Caco-2 (cell line): ENCODE measurements at regions of chr7 and their contacts with region 1.

Region 1: GRCh38 chr7:28921822-28922221 is 36.3 kb downstream of the TRIL start:
- DNase-seq: peak; percentile 62 to 68
- H3K4me3 ChIP-seq: no peak overlapping the region
- H3K4me3 Mint-ChIP-seq: no peak overlapping the region
- H3K27ac Mint-ChIP-seq: no peak overlapping the region
- H3K4me1 ChIP-seq: peaks cover 6% of the 10 kb centered on the region
- H3K4me1 Mint-ChIP-seq: peaks cover 10% of the 10 kb centered on the region
- H3K27me3 ChIP-seq: no peaks in the 10 kb centered on the region
- H3K27me3 Mint-ChIP-seq: no peaks in the 10 kb centered on the region
- CTCF ChIP-seq: peak; percentile 83 to 88

Region 2: DNA sequence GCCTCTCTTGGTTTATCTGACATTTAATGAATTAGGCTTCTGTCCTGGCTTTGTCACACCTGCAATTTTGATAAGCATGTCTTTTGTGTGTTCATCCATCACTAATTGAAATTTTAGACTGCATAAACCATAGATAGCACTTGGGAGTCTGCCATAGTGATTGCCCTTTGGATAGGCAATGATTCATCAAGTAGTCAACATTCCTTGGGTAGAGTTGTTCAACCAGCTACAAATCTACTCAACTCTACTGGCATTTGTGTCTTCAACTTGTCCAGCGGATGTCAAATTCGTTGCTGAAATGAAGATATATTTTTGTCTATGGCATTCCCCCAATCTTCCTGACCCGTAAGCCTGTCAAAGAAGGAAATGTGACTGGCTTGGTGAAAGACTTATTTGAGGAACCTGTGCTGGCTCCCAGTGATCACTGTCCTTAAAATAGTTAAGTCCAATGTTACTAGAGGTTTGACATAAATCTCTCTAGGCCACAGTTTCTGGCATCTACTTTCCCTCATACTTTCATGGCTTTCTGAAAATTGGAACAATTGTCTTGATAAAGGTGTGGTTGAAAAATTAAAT is 543.2 kb before region 1 on chr7:
- CTCF ChIA-PET with region 1: no interaction called
- POLR2A ChIA-PET with region 1: no interaction called
- intact Hi-C with region 1: no loop called
- DNase-seq: no peak
- H3K4me3 ChIP-seq: no peak overlapping the region
- H3K4me3 Mint-ChIP-seq: no peak overlapping the region
- H3K27ac Mint-ChIP-seq: no peak overlapping the region
- H3K4me1 ChIP-seq: 0 out of 2 replicates have a peak, but pooled peaks cover 4% of the 10 kb centered on the region
- H3K4me1 Mint-ChIP-seq: no peaks in the 10 kb centered on the region
- H3K27me3 ChIP-seq: no peaks in the 10 kb centered on the region
- H3K27me3 Mint-ChIP-seq: peaks cover 3% of the 10 kb centered on the region
- CTCF ChIP-seq: no peak

Region 3: DNA sequence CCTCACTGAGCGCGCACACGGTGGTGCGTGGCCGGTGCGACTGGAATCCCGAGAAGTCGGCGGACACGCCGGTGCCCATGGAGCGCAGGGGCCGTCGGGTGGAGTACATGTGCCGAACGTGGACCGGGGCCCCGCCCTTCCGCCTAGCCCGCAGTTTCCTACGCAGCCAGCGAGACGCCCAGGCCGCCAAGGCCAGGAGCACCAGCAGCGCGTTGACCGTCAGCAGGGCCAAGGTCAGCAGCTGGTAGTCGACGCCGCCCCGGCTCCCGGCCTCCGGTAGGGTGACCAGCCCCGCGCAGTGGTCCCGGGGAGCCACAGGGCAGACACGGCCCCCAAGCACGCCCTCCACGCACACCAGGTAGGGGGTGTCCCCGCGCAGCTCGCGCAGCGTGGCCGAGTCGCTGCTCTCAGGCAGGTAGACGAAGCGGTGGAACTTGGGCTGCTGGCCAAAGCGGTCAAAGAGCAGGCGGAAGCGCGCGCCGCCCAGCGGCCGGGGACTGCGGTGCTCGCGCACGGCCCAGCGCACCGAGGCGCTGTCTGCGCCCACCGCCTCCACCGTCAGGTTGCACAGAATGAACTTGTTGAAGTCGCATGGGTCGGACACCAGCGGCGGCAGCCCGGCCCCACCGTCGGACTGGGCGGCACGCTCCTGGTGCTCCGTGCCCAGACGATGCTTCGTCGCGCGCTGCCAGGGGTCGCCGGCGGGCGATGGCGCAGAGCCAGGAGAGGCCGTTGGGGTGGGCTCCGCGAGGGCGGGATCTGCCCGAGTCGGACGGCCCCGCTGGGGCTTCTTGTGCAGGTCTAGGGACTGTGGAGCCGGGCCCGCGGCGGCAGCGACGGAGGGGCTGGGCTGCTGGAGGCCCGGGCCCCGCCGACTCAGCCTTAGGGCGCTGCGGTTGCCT is 34.1 kb after region 1 on chr7:
- CTCF ChIA-PET with region 1: interaction called, 47 read pairs
- POLR2A ChIA-PET with region 1: no interaction called
- intact Hi-C with region 1: loop called (anchors 1 kb)
- DNase-seq: peak; percentile 84 to 89
- H3K4me3 ChIP-seq: peak overlapping the region; percentile 65
- H3K4me3 Mint-ChIP-seq: peak overlapping the region; percentile 73
- H3K27ac Mint-ChIP-seq: no peak overlapping the region
- H3K4me1 ChIP-seq: peaks cover 18% of the 10 kb centered on the region; the same call in 1 of the 2 replicates
- H3K4me1 Mint-ChIP-seq: peaks cover 17% of the 10 kb centered on the region
- H3K27me3 ChIP-seq: no peaks in the 10 kb centered on the region
- H3K27me3 Mint-ChIP-seq: no peaks in the 10 kb centered on the region
- CTCF ChIP-seq: peak; percentile 73 to 81

Region 4: GRCh38 chr7:29105752-29106668 is 184.2 kb after region 1 on chr7:
- CTCF ChIA-PET with region 1: interaction called, 68 read pairs
- POLR2A ChIA-PET with region 1: no interaction called
- intact Hi-C with region 1: loop called (anchors 1 kb)
- DNase-seq: peak; percentile 59 to 79
- H3K4me3 ChIP-seq: no peak overlapping the region
- H3K4me3 Mint-ChIP-seq: no peak overlapping the region
- H3K27ac Mint-ChIP-seq: peak overlapping the region; percentile 50
- H3K4me1 ChIP-seq: peaks cover 33% of the 10 kb centered on the region
- H3K4me1 Mint-ChIP-seq: peaks cover 47% of the 10 kb centered on the region
- H3K27me3 ChIP-seq: no peaks in the 10 kb centered on the region
- H3K27me3 Mint-ChIP-seq: no peaks in the 10 kb centered on the region
- CTCF ChIP-seq: peak; percentile 85 to 88

Region 5: GRCh38 chr7:29189743-29190201 is 267.9 kb after region 1 on chr7:
- CTCF ChIA-PET with region 1: interaction called, 23 read pairs
- POLR2A ChIA-PET with region 1: no interaction called
- intact Hi-C with region 1: loop called (anchors 2 kb)
- DNase-seq: peak; percentile 87 to 88
- H3K4me3 ChIP-seq: no peak overlapping the region
- H3K4me3 Mint-ChIP-seq: peak overlapping the region; percentile 60
- H3K27ac Mint-ChIP-seq: peak overlapping the region; percentile 18
- H3K4me1 ChIP-seq: peaks cover 26% of the 10 kb centered on the region
- H3K4me1 Mint-ChIP-seq: peaks cover 19% of the 10 kb centered on the region
- H3K27me3 ChIP-seq: no peaks in the 10 kb centered on the region
- H3K27me3 Mint-ChIP-seq: no peaks in the 10 kb centered on the region
- CTCF ChIP-seq: peak; percentile 91 to 96

Region 6: GRCh38 chr7:29345600-29345999 is 423.8 kb after region 1 on chr7:
- CTCF ChIA-PET with region 1: interaction called, 26 read pairs
- POLR2A ChIA-PET with region 1: no interaction called
- intact Hi-C with region 1: loop called (anchors 1 kb)
- DNase-seq: peak; percentile 63 to 64
- H3K4me3 ChIP-seq: no peak overlapping the region
- H3K4me3 Mint-ChIP-seq: no peak overlapping the region
- H3K27ac Mint-ChIP-seq: no peak overlapping the region
- H3K4me1 ChIP-seq: no peaks in the 10 kb centered on the region; the same call in 1 of the 2 replicates
- H3K4me1 Mint-ChIP-seq: no peaks in the 10 kb centered on the region
- H3K27me3 ChIP-seq: no peaks in the 10 kb centered on the region
- H3K27me3 Mint-ChIP-seq: no peaks in the 10 kb centered on the region
- CTCF ChIP-seq: peak; percentile 55 to 81

Region 7: DNA sequence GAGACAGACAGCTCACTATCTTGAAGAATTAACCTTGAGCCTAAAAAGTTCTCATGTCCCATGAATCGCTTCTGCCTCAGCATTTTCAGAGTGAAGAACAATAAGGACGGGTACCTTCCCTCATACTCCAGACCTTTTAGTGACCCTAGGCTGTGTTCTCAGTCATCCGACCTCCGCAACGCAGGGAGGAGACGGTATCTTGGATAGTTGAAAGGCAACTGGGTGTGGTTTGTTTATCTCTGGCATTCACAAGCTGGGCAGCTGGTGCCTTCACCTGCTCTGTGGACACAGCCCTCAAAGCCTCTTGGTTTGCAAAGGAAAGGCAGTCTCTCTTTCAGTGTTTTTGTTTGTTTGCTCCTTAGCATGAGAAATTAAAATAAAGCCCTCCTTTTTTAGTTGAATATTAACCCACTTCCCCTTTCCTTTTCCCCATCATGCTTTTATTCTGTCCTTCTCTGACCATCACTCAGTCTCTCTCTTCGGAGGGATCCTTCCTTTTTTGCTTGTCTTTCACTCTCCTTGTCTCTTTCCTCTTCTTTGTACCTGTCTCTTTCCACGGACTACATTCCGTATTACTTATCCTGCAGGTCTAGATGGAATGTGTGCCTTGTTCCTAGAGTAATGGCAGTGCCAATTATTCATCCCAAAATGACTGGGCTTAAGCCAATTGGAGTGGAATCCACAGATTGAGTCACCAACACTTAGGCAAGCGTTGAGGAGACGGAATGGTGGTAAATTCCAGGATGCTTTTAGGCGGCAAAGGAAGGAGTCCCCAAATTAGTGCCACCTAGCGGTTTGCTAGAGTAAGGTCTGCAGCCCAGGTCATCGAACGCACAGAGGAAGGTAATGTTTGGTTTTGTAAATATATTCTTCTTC is 687.6 kb after region 1 on chr7:
- CTCF ChIA-PET with region 1: interaction called, 4 read pairs
- POLR2A ChIA-PET with region 1: no interaction called
- intact Hi-C with region 1: loop called (anchors 2 kb)
- DNase-seq: peak; percentile 71 to 82
- H3K4me3 ChIP-seq: 0 out of 2 replicates have a peak overlapping the region, but pooled peaks have one; percentile 10
- H3K4me3 Mint-ChIP-seq: peak overlapping the region; percentile 73
- H3K27ac Mint-ChIP-seq: peak overlapping the region; percentile 84
- H3K4me1 ChIP-seq: peaks cover 46% of the 10 kb centered on the region
- H3K4me1 Mint-ChIP-seq: peaks cover 44% of the 10 kb centered on the region
- H3K27me3 ChIP-seq: no peaks in the 10 kb centered on the region
- H3K27me3 Mint-ChIP-seq: no peaks in the 10 kb centered on the region
- CTCF ChIP-seq: peak; percentile 75